ENCODE measurements at regions of chrX and their contacts with region 1.

Region 1: DNA sequence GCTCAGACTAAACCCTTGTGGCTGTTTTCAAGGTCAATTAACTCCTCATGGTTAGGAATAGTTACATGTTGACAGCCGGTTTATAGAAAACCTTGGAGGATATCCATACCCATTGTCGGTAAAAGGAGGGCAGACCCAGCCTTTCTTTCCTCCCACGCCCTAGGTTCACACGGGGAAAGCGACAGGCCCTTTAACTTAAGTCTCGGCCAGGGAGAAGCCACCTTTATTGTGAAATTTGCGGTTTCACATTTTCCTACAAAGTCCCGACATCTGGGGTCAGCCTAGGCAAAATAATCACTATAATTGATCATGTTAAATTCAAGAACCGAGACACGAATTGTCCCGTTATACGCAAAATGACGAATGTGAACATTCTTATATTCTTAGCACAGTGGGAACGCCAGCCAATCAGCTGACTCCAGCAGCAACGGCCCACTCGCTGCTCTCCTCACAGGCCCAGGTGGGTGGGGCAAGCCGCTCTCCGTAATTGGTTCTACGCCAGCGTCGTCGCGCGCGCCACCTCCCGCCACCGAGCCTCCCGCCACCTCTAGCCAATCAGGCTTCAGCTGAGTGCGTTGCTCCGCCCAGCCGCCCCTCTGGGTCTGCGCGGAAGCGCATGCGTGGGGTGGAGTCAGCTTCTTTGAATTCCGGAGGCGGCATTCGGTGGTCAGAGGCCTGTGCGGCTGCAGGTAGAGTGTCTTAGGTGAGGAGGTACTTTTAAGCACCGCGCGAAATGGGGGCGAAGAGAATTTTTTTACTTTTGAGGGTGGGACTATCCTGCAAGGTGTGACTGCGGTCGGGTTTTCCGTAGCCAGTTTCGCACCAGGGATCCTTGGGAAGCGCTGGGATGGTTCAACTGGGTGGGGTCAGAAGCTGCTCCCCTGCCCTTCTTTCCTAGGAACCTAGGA is at the start of gene CENPI:
- DNase-seq: peak; percentile 94
- ATAC-seq: peak; percentile 100
- H3K4me3 ChIP-seq: peak within 1 kb of the TSS; percentile 51 to 82 (median 67)
- H3K4me3 Mint-ChIP-seq: peak within 1 kb of the TSS; percentile 95
- H3K27ac ChIP-seq: peak within 1 kb of the TSS; percentile 70 to 91
- H3K27ac Mint-ChIP-seq: peak within 1 kb of the TSS; percentile 92
- H3K4me1 ChIP-seq: peaks cover 0 to 10% of the 10 kb centered on the region in 2 donors
- H3K4me1 Mint-ChIP-seq: peaks cover 12% of the 10 kb centered on the region
- H3K27me3 ChIP-seq: no peaks in the 10 kb centered on the region
- H3K27me3 Mint-ChIP-seq: no peaks in the 10 kb centered on the region
- CTCF ChIP-seq: no peak
- total RNA-seq, gene CENPI: 1.9 and 3.2 TPM in 2 replicates

Region 2: DNA sequence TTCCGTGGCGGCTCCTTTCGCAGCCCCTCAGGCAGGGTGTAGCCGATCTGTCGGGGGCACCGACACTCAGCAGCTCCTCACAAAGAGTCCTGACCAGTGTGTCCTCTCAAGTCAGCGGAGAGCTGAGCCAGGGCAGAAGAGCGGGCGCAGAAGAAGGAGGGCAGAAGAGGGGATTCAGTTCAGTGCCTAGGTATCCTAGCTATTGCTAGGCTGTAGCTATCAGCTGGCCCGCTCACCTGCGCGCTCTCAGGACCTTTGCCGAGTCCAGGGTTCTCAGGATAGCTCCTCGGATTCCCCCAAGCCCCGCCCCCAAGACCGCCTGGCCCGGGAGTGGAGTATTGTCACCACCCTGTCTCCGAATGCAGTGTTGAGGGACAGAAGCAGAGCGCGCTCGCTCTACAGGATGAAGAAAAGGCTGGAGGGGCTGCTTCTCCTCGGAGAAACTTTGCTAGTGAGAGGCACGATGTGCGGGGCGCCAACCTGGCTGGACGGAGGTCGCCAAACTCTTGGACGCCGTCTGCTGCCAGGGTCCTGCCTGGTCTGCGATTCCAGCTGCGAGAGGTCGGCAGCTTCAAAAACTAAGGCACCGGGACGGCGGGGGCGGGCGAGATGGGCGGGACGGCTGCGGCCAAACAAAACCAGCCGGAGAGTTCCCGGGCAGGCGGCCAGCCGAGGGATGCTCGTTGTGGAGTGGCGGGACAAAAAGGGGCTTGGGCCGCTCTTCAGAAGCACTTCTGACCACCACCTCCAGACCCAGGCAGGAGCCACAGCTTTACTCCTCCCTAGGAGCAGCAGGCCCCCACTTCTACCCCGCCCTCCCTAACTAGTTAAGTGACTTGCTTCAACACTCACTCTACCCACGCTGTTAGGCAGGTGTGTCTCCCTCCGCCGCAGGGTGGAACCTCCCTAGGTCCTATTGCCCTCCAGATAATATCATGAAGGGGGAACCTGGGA is 168.9 kb before region 1 on chrX and contains the start of gene XKRX:
- CTCF ChIA-PET with region 1: no interaction called
- POLR2A ChIA-PET with region 1: no interaction called
- intact Hi-C with region 1: loop called (anchors 5 kb)
- DNase-seq: peak; percentile 66
- ATAC-seq: peak; percentile 74
- H3K4me3 ChIP-seq: peak within 1 kb of the TSS in 4 of 5 experiments; percentile 58 to 68 (median 62)
- H3K4me3 Mint-ChIP-seq: peak within 1 kb of the TSS; percentile 95
- H3K27ac ChIP-seq: peak within 1 kb of the TSS; percentile 61 to 67
- H3K27ac Mint-ChIP-seq: peak within 1 kb of the TSS; percentile 93
- H3K4me1 ChIP-seq: peaks cover 18 to 50% of the 10 kb centered on the region in 2 donors
- H3K4me1 Mint-ChIP-seq: peaks cover 58% of the 10 kb centered on the region
- H3K27me3 ChIP-seq: no peaks in the 10 kb centered on the region
- H3K27me3 Mint-ChIP-seq: no peaks in the 10 kb centered on the region
- CTCF ChIP-seq: no peak
- total RNA-seq, gene XKRX: 4.9 and 5.4 TPM in 2 replicates

Region 3: GRCh38 chrX:101051549-101052302 is 46.1 kb before region 1 on chrX and contains the start of gene TRMT2B:
- CTCF ChIA-PET with region 1: no interaction called
- POLR2A ChIA-PET with region 1: no interaction called
- intact Hi-C with region 1: loop called (anchors 1 kb)
- DNase-seq: peak; percentile 85
- ATAC-seq: peak; percentile 83
- H3K4me3 ChIP-seq: peak within 1 kb of the TSS; percentile 56 to 85 (median 76)
- H3K4me3 Mint-ChIP-seq: peak within 1 kb of the TSS; percentile 86
- H3K27ac ChIP-seq: peak within 1 kb of the TSS; percentile 59 to 86
- H3K27ac Mint-ChIP-seq: peak within 1 kb of the TSS; percentile 93
- H3K4me1 ChIP-seq: peaks cover 7 to 13% of the 10 kb centered on the region in 2 donors
- H3K4me1 Mint-ChIP-seq: peaks cover 25% of the 10 kb centered on the region
- H3K27me3 ChIP-seq: no peaks in the 10 kb centered on the region
- H3K27me3 Mint-ChIP-seq: no peaks in the 10 kb centered on the region
- CTCF ChIP-seq: no peak
- total RNA-seq, gene TRMT2B: 51.2 and 56.4 TPM in 2 replicates

Region 4: GRCh38 chrX:101337776-101338271 is 240.0 kb after region 1 on chrX:
- CTCF ChIA-PET with region 1: no interaction called
- POLR2A ChIA-PET with region 1: no interaction called
- intact Hi-C with region 1: no loop called
- DNase-seq: no peak
- ATAC-seq: no peak
- H3K4me3 ChIP-seq: no peak overlapping the region
- H3K4me3 Mint-ChIP-seq: no peak overlapping the region
- H3K27ac ChIP-seq: no peak overlapping the region
- H3K27ac Mint-ChIP-seq: no peak overlapping the region
- H3K4me1 ChIP-seq: no peaks in the 10 kb centered on the region
- H3K4me1 Mint-ChIP-seq: no peaks in the 10 kb centered on the region
- H3K27me3 ChIP-seq: no peaks in the 10 kb centered on the region
- H3K27me3 Mint-ChIP-seq: no peaks in the 10 kb centered on the region
- CTCF ChIP-seq: no peak

Region 5: GRCh38 chrX:101348452-101349192 is 250.8 kb after region 1 on chrX and contains the start of gene TIMM8A:
- CTCF ChIA-PET with region 1: no interaction called
- POLR2A ChIA-PET with region 1: no interaction called
- intact Hi-C with region 1: no loop called
- DNase-seq: peak; percentile 82
- ATAC-seq: peak; percentile 99
- H3K4me3 ChIP-seq: peak within 1 kb of the TSS; percentile 64 to 81 (median 74)
- H3K4me3 Mint-ChIP-seq: peak within 1 kb of the TSS; percentile 92
- H3K27ac ChIP-seq: peak within 1 kb of the TSS; percentile 55 to 81
- H3K27ac Mint-ChIP-seq: peak within 1 kb of the TSS; percentile 86
- H3K4me1 ChIP-seq: peaks cover 3 to 15% of the 10 kb centered on the region in 2 donors
- H3K4me1 Mint-ChIP-seq: peaks cover 12% of the 10 kb centered on the region
- H3K27me3 ChIP-seq: no peaks in the 10 kb centered on the region
- H3K27me3 Mint-ChIP-seq: no peaks in the 10 kb centered on the region
- CTCF ChIP-seq: no peak
- total RNA-seq, gene TIMM8A: 12.0 and 13.4 TPM in 2 replicates